Breast epithelium (tissue), 4 donors: ENCODE measurements at regions of chr4 and their contacts with region 1.

Region 1: GRCh38 chr4:173362666-173363065 is 8.1 kb upstream of the SAP30 start:
- DNase-seq: no peak
- H3K4me3 ChIP-seq: no peak overlapping the region
- H3K27ac ChIP-seq: no peak overlapping the region
- H3K4me1 ChIP-seq: no peaks in the 10 kb centered on the region
- H3K27me3 ChIP-seq: no peaks in the 10 kb centered on the region
- CTCF ChIP-seq: no peak
- POLR2A ChIP-seq: no peak

Region 2: DNA sequence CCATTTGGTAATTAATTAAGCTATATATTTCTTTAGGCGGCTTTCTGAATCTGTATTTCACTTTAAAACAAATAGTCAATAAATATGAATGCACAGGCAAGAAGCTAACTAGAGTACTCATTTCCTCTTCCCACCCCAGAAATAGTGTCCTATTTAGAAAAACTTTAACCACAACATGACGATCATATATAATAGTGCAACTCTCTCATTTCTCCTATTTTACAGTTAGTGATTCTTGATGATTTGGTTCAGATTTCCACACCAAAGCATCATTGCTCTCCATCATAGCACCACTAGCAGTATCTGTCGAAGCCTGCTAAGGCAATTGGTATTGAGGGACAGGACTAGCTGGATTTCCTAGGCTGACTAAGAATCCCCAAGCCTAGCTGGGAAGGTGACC is 1733.5 kb before region 1 on chr4:
- intact Hi-C with region 1: no loop called
- DNase-seq: no peak
- H3K4me3 ChIP-seq: no peak overlapping the region
- H3K27ac ChIP-seq: no peak overlapping the region
- H3K4me1 ChIP-seq: no peaks in the 10 kb centered on the region
- H3K27me3 ChIP-seq: no peaks in the 10 kb centered on the region
- CTCF ChIP-seq: no peak
- POLR2A ChIP-seq: no peak

Region 3: DNA sequence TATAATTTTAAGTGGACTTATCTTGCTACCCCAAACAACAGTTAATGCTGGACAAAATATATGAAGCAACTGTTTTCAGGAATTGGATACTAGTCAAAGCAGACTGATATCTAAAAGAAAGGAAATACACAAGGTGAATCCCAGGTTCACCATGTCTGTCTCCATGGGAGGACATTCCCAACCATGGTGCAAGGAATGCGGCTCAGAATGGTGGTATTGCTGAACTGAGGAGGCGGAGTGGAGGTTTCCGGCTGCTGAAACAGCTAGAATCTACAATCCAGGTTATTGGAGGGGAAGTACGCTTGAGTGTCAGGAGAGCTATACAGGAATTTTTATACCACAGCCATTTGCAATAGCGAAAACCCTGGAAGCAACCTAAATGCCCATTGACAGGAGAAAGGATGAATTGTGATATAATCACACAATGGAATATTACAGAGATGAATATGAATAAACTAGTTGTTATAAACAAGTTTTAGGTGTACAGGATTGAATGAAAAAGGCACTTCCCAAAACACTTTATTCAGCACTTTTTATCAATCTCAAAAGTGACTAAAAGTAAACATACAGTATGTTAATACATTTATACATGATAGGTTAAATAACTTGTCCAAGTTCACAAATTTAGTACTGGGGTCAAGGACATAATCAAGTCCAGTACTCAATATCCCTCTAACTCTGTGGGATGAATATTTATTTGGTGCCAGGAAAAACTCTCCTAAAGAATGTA is 37.5 kb before region 1 on chr4:
- intact Hi-C with region 1: loop called (anchors 2 kb)
- DNase-seq: no peak
- H3K4me3 ChIP-seq: no peak overlapping the region
- H3K27ac ChIP-seq: no peak overlapping the region
- H3K4me1 ChIP-seq: no peaks in the 10 kb centered on the region
- H3K27me3 ChIP-seq: no peaks in the 10 kb centered on the region
- CTCF ChIP-seq: no peak
- POLR2A ChIP-seq: no peak

Region 4: GRCh38 chr4:173448603-173449379 is 86.1 kb after region 1 on chr4:
- intact Hi-C with region 1: no loop called
- DNase-seq: no peak
- H3K4me3 ChIP-seq: no peak overlapping the region
- H3K27ac ChIP-seq: no peak overlapping the region
- H3K4me1 ChIP-seq: no peaks in the 10 kb centered on the region
- H3K27me3 ChIP-seq: no peaks in the 10 kb centered on the region
- CTCF ChIP-seq: no peak
- POLR2A ChIP-seq: no peak